Activated naive CD4-positive, alpha-beta T cell treated with anti-CD3 and anti-CD28 coated beads, Interleukin-2, amount 10 ng/mL, durations not matched to agents 7 days and 5 days (primary cell): ENCODE measurements at regions of chr10 and their contacts with region 1.

Region 1: DNA sequence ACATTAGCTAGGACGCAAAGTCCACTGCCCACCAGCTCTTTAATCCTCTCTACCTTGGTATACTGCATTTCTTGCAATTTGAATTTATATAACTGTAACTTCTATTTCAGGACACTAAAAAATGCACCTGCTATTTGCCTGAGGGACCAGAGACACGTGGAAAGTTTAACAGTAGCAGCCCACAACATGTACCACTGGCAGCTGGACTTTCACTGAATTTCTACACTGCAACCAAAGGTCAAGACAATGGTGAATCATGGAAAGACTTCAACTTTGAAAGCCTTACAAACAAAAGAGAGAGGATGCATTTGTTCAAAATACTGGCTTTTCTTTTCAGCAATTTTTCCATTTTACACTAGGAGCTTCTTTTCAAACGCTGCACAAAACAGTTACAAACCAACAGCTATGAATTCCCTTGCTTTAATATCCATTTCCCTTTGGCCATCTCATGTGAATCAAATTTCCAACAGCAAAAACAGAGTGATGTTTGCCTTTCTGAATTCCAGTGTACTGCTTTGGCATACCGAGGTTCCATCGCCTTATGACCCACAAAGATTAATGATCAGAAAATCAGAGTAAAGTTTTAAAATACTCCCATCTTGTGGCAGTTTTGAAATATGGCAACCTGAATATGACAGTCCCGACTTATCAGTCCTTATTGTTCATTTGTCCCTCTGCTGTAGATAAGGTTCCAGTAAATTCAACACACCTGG is 29.9 kb upstream of the HNRNPH3 start:
- DNase-seq: no peak
- H3K4me3 Mint-ChIP-seq: no peak overlapping the region
- H3K27ac Mint-ChIP-seq: no peak overlapping the region
- H3K4me1 Mint-ChIP-seq: no peaks in the 10 kb centered on the region
- H3K27me3 Mint-ChIP-seq: no peaks in the 10 kb centered on the region

Region 2: GRCh38 chr10:67849331-67850011 is 452.5 kb before region 1 on chr10:
- CTCF ChIA-PET with region 1: interaction called, 10 read pairs
- DNase-seq: peak; percentile 97
- H3K4me3 Mint-ChIP-seq: peak overlapping the region; percentile 84
- H3K27ac Mint-ChIP-seq: peak overlapping the region; percentile 91
- H3K4me1 Mint-ChIP-seq: peaks cover 19% of the 10 kb centered on the region
- H3K27me3 Mint-ChIP-seq: no peaks in the 10 kb centered on the region

Region 3: DNA sequence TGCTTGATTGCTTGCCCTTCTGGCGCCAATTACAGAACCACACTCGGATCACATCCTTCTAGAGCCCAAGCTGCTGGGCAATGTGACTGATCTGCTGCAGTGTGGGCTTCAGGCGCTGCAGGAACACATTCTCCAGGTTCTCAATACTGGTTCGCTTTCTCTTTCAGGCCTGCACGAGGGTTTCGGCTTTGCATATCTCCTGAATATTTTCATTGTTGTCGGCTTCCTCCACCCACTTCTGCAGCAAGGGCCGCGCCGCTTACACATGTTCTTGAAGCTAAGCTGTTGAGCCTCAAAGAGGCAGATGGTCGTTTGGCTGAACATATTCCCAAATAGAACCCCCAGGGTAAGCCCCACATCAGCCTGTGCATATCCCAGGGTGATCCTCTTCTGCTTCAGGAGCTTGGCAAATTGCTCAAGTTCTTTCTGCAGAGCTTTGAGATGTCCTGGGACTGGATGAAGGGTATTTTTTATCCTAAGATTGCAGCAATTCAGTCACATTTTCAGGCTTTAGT is 291.5 kb before region 1 on chr10:
- CTCF ChIA-PET with region 1: no interaction called
- DNase-seq: no peak
- H3K4me3 Mint-ChIP-seq: no peak overlapping the region
- H3K27ac Mint-ChIP-seq: no peak overlapping the region
- H3K4me1 Mint-ChIP-seq: no peaks in the 10 kb centered on the region
- H3K27me3 Mint-ChIP-seq: no peaks in the 10 kb centered on the region

Region 4: GRCh38 chr10:68212721-68213352 is 89.1 kb before region 1 on chr10:
- CTCF ChIA-PET with region 1: interaction called, 68 read pairs
- DNase-seq: no peak
- H3K4me3 Mint-ChIP-seq: no peak overlapping the region
- H3K27ac Mint-ChIP-seq: no peak overlapping the region
- H3K4me1 Mint-ChIP-seq: no peaks in the 10 kb centered on the region
- H3K27me3 Mint-ChIP-seq: peaks cover 23% of the 10 kb centered on the region

Region 5: GRCh38 chr10:68318331-68319059 is 16.5 kb after region 1 on chr10:
- CTCF ChIA-PET with region 1: interaction called, 18 read pairs
- DNase-seq: no peak
- H3K4me3 Mint-ChIP-seq: no peak overlapping the region
- H3K27ac Mint-ChIP-seq: no peak overlapping the region
- H3K4me1 Mint-ChIP-seq: peaks cover 14% of the 10 kb centered on the region
- H3K27me3 Mint-ChIP-seq: peaks cover 5% of the 10 kb centered on the region